ENCODE measurements at regions of chr16 and their contacts with region 1.

Region 1: GRCh38 chr16:49287572-49287971 is 5.9 kb upstream of the CBLN1 start:
- DNase-seq: no peak
- ATAC-seq: no peak; the same call in 1 of the 2 replicates
- H3K4me3 ChIP-seq: no peak overlapping the region
- H3K27ac ChIP-seq: no peak overlapping the region
- H3K4me1 ChIP-seq: no peaks in the 10 kb centered on the region
- H3K27me3 ChIP-seq: no peaks in the 10 kb centered on the region
- CTCF ChIP-seq: no peak
- POLR2A ChIP-seq: no peak
- RAD21 ChIP-seq: no peak

Region 2: GRCh38 chr16:48592839-48593429 is 694.6 kb before region 1 on chr16:
- CTCF ChIA-PET with region 1: no interaction called
- POLR2A ChIA-PET with region 1: no interaction called
- RAD21 ChIA-PET with region 1: no interaction called
- intact Hi-C with region 1: no loop called
- DNase-seq: no peak
- ATAC-seq: no peak
- H3K4me3 ChIP-seq: no peak overlapping the region
- H3K27ac ChIP-seq: no peak overlapping the region
- H3K4me1 ChIP-seq: no peaks in the 10 kb centered on the region
- H3K27me3 ChIP-seq: no peaks in the 10 kb centered on the region
- CTCF ChIP-seq: no peak
- POLR2A ChIP-seq: no peak
- RAD21 ChIP-seq: no peak

Region 3: DNA sequence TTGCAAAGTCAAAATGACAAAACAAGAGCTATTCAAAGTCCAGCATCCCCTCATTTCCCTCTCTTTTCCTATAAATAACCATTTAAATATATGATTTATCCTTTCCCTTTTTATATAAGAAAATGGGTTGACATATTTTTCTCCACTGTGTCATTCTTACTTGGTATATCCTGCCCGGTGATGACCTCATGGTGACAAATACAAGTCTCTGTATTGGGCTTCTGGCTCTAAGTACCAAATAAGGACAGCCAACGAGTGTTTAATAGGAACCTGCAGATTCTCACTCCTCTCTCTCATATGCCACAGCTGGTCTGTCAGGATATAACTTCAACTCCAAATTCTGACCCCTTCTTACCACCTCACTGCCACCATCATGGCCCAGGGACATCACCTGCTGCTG is 19.6 kb after region 1 on chr16:
- CTCF ChIA-PET with region 1: no interaction called
- POLR2A ChIA-PET with region 1: no interaction called
- RAD21 ChIA-PET with region 1: no interaction called
- intact Hi-C with region 1: loop called (anchors 2 kb)
- DNase-seq: no peak
- ATAC-seq: no peak
- H3K4me3 ChIP-seq: no peak overlapping the region
- H3K27ac ChIP-seq: no peak overlapping the region
- H3K4me1 ChIP-seq: no peaks in the 10 kb centered on the region
- H3K27me3 ChIP-seq: peaks cover 30% of the 10 kb centered on the region
- CTCF ChIP-seq: no peak
- POLR2A ChIP-seq: no peak
- RAD21 ChIP-seq: no peak

Region 4: GRCh38 chr16:49365711-49366509 is 78.3 kb after region 1 on chr16:
- CTCF ChIA-PET with region 1: no interaction called
- POLR2A ChIA-PET with region 1: no interaction called
- RAD21 ChIA-PET with region 1: no interaction called
- intact Hi-C with region 1: no loop called
- DNase-seq: no peak
- ATAC-seq: no peak
- H3K4me3 ChIP-seq: no peak overlapping the region
- H3K27ac ChIP-seq: no peak overlapping the region
- H3K4me1 ChIP-seq: no peaks in the 10 kb centered on the region
- H3K27me3 ChIP-seq: 0 out of 2 replicates have a peak, but pooled peaks cover 13% of the 10 kb centered on the region
- CTCF ChIP-seq: no peak
- POLR2A ChIP-seq: no peak
- RAD21 ChIP-seq: no peak